Calu3 (cell line): ENCODE measurements at regions of chr5 and their contacts with region 1.

Region 1: DNA sequence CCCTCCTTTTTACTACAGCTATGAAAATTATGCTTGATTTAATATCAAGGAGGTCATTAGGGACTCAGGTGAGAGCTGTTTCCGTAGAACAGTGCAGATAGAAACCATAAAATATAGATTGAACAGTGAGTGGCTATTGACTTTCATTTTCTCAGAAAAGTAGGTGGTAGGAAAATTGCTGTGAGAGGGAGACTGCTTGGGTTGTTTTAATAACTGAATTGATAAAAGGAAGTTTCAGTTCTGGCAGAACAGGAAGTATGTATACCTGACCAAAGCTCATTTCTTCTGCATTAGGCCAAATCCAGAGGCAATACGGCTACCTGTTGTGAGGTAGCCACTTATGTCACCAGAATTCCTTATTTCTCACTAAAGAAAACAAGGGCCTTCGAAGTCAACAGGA is 761.7 kb upstream of the ARRDC3 start:
- DNase-seq: no peak
- H3K4me3 Mint-ChIP-seq: no peak overlapping the region
- H3K27ac Mint-ChIP-seq: no peak overlapping the region
- H3K4me1 Mint-ChIP-seq: peaks cover 15% of the 10 kb centered on the region
- H3K27me3 Mint-ChIP-seq: no peaks in the 10 kb centered on the region
- CTCF ChIP-seq: no peak

Region 2: GRCh38 chr5:91938441-91938840 is 206.4 kb before region 1 on chr5:
- CTCF ChIA-PET with region 1: no interaction called
- intact Hi-C with region 1: no loop called
- DNase-seq: no peak
- H3K4me3 Mint-ChIP-seq: no peak overlapping the region
- H3K27ac Mint-ChIP-seq: no peak overlapping the region
- H3K4me1 Mint-ChIP-seq: no peaks in the 10 kb centered on the region
- H3K27me3 Mint-ChIP-seq: no peaks in the 10 kb centered on the region
- CTCF ChIP-seq: no peak

Region 3: DNA sequence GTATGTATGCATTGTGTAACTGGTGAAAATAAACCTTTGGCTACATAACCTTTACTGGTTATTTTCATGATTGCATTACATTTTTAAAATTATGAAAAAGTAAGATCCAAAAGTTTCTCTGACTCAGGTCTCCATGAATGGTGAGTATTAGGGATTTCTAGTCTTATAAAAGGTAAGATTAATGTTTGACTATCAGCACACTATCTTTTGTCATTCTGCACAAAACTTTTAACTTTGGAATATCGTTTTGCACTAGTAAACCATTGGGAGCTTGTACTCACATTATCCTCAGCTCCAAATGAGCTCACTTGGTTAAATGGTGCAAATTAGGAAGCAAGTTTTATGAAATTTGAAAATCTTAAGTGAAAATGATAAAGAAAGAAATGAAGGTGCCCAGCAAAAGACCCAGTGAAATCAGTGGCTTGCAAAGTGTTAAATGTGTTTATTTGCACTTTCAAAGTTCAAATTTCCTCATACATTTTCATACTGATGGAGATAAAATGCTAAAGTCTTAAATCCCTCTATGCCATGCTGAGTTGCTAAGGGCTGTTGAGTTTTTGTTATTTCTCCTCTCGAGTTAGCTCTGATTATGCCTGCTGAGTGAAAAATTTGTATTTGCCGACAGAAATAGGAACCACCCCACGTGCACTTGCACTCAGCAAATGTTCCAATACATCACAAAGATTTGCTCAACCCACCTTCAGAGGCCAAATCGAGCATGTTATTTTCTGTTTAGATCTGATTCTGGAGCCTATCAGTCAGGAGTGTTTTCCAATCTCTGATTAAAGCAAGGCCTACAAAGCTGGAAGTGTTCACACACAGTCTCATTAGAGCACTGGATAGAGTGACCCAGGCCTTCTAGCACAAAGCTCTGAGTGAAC is 550.5 kb after region 1 on chr5:
- CTCF ChIA-PET with region 1: interaction called, 15 read pairs
- intact Hi-C with region 1: no loop called
- DNase-seq: no peak
- H3K4me3 Mint-ChIP-seq: no peak overlapping the region
- H3K27ac Mint-ChIP-seq: no peak overlapping the region
- H3K4me1 Mint-ChIP-seq: no peaks in the 10 kb centered on the region
- H3K27me3 Mint-ChIP-seq: no peaks in the 10 kb centered on the region
- CTCF ChIP-seq: no peak